ENCODE measurements at regions of chr11 and their contacts with region 1.

Region 1: DNA sequence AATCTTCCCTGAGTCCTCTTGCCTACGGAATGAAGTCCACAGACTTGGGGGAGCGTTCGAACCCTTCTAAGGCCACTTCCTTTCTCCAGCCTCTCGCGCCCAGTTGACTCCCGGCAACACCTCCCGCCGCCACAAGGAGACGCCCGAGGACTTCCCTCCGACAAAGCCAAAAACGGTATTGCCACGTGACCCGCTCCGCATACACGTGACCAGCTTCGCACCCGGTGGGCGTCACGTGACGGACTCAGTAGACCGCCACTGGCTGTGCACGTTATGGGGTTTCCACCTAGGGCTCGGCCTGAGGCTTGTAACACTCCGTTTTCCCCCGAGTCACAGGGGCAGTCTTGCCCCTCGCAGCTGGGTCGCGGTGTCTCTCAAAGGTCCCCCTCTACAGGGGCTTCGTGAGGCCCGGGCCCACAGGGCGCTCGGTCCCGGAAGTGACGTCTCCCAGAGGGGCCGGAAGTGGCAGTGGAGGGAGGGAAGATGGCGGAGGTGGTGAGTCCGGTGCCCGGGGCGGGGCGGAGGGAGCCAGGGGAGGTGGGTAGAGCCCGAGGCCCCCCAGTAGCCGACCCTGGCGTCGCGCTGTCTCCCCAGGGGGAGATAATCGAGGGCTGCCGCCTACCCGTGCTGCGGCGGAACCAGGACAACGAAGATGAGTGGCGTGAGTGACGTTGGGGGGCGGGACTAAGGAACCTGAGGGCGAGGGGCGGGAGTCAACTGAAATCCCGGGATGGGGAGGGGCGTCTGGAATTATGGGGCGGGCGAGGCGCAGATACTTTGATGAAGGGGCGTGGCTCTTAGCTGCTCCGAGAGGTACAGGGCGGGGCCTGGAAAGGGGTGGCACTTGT is at the start of gene KAT5:
- DNase-seq: peak; percentile 89
- CTCF ChIP-seq: peak; percentile 99

Region 2: DNA sequence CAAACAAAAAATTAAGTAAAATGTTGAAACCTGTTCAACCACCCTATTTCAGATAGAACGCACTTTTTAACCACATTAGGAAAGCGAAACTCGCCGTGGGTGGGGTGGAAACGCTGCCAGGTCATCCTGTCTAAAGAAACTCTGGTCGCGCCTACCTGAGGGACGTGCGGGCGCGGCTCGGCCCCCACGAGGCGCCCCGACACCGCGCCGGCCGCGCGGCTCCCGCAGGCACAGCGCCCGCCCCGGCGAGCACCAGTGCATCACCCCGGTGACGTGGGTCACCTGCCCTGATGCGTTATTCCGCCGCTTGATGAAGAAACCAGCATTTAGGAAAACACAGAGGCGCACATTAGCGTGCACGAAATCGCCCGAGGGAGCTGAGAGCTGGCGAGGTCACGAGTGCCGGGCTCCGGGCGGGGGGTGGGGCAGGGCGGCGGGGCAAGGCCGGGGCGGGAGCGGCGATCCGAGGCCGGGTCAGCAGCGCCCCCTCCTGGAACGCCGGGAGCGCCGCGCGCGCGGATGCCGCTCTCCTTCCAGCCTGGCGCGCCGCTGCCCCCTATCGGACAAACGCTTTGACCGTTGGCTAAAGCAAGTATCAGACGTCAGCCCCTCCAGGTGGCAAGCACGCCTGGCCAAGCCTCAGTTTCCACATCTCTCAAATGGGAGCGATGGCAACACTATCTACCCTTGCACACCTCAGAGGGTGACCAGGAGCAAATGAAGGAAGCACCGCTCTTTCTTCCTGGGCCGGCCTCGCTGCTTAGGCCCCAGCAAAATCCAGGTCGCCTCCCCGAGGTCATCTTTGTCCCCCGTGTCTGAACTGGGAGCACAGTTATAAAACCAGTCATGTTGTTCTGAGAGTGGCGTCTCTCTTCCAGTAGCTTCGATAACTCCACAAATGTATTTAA is 106.1 kb after region 1 on chr11:
- in situ Hi-C with region 1: loop called (anchors 10 kb)
- DNase-seq: peak; percentile 95
- CTCF ChIP-seq: peak; percentile 100